Transverse colon (tissue), 4 donors: ENCODE measurements at regions of chr22 and their contacts with region 1.

Region 1: GRCh38 chr22:36194971-36195370 is 6.6 kb downstream of the APOL4 start:
- DNase-seq: peak; percentile 64
- H3K4me3 ChIP-seq: no peak overlapping the region
- H3K27ac ChIP-seq: no peak overlapping the region
- H3K4me1 ChIP-seq: peaks cover 0 to 23% (median 6%) of the 10 kb centered on the region in 4 donors
- H3K27me3 ChIP-seq: no peaks in the 10 kb centered on the region
- CTCF ChIP-seq: peak; percentile 62 to 71 (median 64)
- EP300 ChIP-seq: no peak
- POLR2A ChIP-seq: no peak

Region 2: DNA sequence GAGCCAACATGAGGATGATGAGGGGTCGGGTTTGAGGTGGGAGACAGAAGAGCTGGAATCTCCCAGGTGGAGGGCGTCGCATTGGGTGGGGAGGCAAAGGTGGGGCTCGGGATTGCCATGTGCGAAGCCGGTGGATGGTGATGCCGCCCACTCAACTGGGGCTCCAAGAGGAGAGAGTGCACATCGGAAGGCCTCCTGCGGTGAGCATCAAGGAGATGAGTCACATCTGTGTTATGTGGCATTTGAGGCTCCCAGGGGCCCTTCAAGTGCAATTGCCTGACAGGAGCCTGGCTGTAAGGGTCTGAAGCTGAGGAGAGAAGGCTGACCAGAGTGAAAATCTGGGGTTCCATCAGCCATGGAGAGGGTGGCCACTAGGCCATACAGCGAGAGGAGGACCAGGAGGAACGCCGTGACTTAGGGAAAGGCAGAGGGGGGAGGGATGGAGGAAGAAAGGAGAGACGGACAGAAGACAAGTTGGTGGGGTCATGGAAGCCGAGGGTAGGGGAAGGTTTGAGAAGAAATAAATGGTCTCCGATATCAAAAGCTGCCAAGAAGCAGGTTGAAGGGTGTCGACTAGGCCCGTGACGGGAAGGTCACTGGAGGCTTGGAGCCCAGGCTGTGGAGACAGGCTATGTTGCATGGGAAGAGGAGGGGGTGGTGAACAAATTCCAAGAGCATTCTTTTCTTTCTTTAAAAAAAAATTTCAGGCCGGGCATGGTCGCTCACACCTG is 633.0 kb before region 1 on chr22:
- in situ Hi-C with region 1: no loop called
- intact Hi-C with region 1: no loop called
- DNase-seq: no peak
- H3K4me3 ChIP-seq: no peak overlapping the region
- H3K27ac ChIP-seq: no peak overlapping the region
- H3K4me1 ChIP-seq: peaks cover 0 to 5% (median 0%) of the 10 kb centered on the region in 4 donors
- H3K27me3 ChIP-seq: no peaks in the 10 kb centered on the region
- CTCF ChIP-seq: no peak
- EP300 ChIP-seq: no peak
- POLR2A ChIP-seq: no peak

Region 3: DNA sequence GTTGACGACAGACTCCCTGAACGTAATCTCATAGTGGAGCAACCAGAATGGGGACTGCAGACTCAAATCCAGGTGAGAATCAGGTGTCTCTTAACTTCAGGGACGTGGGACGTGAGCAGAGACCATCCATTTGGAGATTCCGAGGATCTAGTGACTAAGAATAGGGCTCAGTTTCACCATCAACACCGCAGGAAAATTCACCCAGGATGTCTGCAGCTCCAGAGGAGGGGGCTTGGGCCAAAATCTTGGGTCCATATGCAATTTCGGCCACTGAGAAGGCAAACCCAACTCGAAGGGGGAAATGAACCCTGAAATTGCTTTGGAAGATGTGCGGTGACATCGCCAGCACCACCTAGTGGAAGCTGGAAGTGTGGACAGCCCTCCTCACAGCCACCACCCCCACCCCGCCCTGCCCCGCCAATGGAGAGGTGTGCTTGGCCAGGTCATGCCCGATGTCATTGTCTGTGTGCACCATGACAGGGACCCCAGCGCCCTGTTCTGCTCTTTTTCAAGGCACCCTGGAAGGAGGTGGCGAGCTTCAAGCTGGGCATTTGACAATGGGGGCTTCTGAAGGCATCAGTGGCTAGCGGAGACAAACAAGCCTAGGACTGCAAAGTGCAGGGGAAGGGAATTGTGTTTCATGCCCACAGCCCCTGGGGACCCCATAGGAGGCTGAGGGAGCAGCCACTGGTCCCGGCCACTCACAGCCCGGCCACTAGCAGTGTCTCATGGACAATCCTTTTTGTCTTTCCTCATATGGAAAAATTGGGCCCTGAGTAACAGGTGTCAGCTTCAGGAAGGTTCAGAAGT is 82.7 kb after region 1 on chr22:
- in situ Hi-C with region 1: loop called in 1 of 4 experiments (anchors 10 kb)
- intact Hi-C with region 1: loop called (anchors 5 kb)
- DNase-seq: peak; percentile 68
- H3K4me3 ChIP-seq: no peak overlapping the region
- H3K27ac ChIP-seq: peak overlapping the region in 2 of 4 donors; percentile 29 to 56
- H3K4me1 ChIP-seq: peaks cover 0 to 10% (median 5%) of the 10 kb centered on the region in 4 donors
- H3K27me3 ChIP-seq: no peaks in the 10 kb centered on the region
- CTCF ChIP-seq: peak; percentile 75 to 86 (median 81)
- EP300 ChIP-seq: no peak
- POLR2A ChIP-seq: no peak

Region 4: DNA sequence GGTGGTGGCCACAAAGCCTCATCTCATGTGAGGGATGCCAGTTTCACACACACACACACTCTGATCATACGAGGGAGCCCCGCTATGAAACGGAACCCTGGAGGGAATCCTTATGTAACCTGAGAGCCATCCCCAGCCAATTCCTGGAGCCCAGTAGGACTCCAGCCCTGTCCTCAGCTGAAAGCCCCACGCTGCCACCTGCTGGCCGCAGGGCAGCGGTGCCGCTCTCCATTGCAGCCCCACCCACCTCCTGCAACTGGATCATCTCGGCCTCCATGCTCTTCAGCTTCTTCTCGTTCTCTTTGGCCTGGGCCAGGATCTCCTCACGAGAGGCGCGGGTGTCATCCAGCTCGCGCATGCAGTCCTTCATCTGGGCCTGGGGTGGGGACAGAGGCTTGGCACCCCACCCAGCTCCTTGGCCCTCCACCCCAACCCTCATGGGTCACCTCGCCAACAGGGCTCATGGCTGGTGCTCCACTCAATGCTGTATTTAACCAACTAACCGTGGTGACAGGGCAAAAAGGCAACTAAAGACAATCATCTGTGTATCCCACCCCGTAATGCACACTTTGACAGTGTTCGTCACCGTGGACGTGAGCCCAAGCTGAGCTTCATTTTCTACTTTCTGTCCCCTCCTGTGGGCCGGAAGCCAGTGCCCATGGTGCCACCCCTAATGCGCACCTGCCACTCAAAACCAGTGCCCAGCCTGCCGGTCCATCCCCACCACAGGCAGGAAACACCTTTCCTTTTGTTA is 91.7 kb after region 1 on chr22:
- in situ Hi-C with region 1: loop called in 1 of 4 experiments (anchors 10 kb)
- intact Hi-C with region 1: no loop called
- DNase-seq: peak; percentile 75
- H3K4me3 ChIP-seq: no peak overlapping the region
- H3K27ac ChIP-seq: peak overlapping the region; percentile 63 to 81 (median 74)
- H3K4me1 ChIP-seq: peaks cover 0 to 10% (median 3%) of the 10 kb centered on the region in 4 donors
- H3K27me3 ChIP-seq: no peaks in the 10 kb centered on the region
- CTCF ChIP-seq: peak; percentile 84 to 96 (median 90)
- EP300 ChIP-seq: no peak
- POLR2A ChIP-seq: no peak

Region 5: DNA sequence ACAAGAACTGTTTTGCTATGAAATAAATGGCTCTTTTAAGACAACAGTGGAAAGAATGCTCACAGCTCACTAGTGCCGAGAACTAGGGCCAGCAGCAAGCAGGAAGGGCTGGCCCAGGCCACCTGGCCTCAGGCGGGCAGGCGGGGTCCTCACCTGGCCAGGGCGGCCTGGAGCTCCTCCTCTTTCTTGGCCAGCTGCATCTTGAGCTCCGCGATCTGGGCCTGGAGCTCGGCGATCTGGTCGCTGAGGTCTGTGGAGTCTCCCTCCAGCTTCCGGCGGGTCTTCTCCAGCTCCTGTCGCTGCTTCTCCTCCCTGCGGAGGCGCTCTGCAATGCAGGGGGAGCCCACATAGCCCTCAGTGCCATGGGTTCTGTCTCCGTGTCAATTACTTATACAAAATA is 101.7 kb after region 1 on chr22:
- in situ Hi-C with region 1: no loop called
- intact Hi-C with region 1: no loop called
- DNase-seq: no peak
- H3K4me3 ChIP-seq: no peak overlapping the region
- H3K27ac ChIP-seq: peak overlapping the region in 2 of 4 donors; percentile 8 to 17
- H3K4me1 ChIP-seq: peaks cover 0 to 8% (median 0%) of the 10 kb centered on the region in 4 donors
- H3K27me3 ChIP-seq: no peaks in the 10 kb centered on the region
- CTCF ChIP-seq: no peak
- EP300 ChIP-seq: no peak
- POLR2A ChIP-seq: no peak

Region 6: DNA sequence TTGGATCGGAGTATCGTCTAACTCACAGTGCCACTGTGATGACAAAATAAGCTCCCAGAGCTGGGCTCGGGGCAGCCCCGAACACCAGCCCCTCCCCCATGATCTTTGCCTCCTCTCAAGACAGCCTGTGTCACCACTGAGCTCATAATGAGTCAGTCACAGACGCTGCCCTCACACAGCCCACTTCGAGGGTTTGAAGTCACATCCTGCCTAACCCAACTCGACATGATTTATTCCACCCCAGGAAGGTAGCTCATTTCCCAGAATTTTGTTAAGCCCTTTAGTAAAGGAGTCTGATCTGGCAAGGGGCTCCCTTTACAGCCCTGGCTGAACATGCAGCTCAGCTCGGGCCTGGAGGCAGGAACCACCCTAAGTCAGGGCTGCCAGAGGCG is 170.0 kb after region 1 on chr22:
- in situ Hi-C with region 1: no loop called
- intact Hi-C with region 1: no loop called
- DNase-seq: peak; percentile 75
- H3K4me3 ChIP-seq: no peak overlapping the region
- H3K27ac ChIP-seq: peak overlapping the region; percentile 96 to 100 (median 98)
- H3K4me1 ChIP-seq: peaks cover 91 to 99% (median 97%) of the 10 kb centered on the region in 4 donors
- H3K27me3 ChIP-seq: no peaks in the 10 kb centered on the region
- CTCF ChIP-seq: no peak
- EP300 ChIP-seq: peak; percentile 29
- POLR2A ChIP-seq: no peak

Region 7: GRCh38 chr22:36486619-36487384 is 291.8 kb after region 1 on chr22:
- in situ Hi-C with region 1: loop called in 2 of 4 experiments (anchors 25 kb)
- intact Hi-C with region 1: loop called (anchors 5 kb)
- DNase-seq: peak; percentile 58
- H3K4me3 ChIP-seq: no peak overlapping the region
- H3K27ac ChIP-seq: no peak overlapping the region
- H3K4me1 ChIP-seq: peaks cover 0 to 6% (median 3%) of the 10 kb centered on the region in 4 donors
- H3K27me3 ChIP-seq: no peaks in the 10 kb centered on the region
- CTCF ChIP-seq: peak; percentile 61 to 78 (median 71)
- EP300 ChIP-seq: no peak
- POLR2A ChIP-seq: no peak

Region 8: GRCh38 chr22:36628571-36629065 is 433.6 kb after region 1 on chr22:
- in situ Hi-C with region 1: no loop called
- intact Hi-C with region 1: no loop called
- DNase-seq: no peak
- H3K4me3 ChIP-seq: no peak overlapping the region
- H3K27ac ChIP-seq: no peak overlapping the region
- H3K4me1 ChIP-seq: no peaks in the 10 kb centered on the region
- H3K27me3 ChIP-seq: peaks cover 30% of the 10 kb centered on the region
- CTCF ChIP-seq: no peak
- EP300 ChIP-seq: no peak
- POLR2A ChIP-seq: no peak